ENCODE measurements at regions of chr10 and their contacts with region 1.

Region 1: DNA sequence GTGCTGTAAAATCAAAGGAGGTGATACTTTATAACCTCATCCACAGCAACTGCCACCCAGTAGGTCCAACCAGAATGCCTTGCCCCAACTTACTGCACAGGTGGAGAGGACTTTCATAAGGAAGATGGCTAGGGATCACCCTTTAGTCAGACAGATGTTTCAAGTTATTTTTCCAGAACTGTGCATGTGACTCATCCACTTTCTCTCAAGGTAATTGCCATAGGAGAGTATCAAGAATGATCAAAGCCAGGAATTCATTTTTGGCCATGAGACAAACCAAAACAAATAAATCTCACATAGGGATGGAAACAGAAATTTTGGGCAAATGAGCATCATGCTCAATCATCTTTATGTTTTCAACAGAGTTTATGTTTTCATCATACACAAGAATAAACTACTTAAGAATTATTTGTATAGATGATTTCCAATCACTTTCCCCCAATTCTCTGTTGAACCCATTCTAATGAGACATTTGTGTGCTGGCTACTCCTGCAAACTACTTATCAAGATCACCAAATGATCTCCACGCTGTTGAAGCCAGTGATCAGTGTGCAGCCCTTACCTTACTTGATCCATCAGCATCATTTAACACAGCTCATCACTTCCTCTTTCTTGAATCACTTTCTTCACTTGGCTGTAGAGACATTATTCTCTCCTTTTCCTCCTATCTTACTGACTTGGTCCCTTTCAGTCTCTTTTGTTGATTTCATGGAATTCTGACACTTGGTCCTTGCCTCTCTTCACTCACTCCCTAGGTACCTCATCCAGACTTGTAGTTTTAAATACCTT is 74.0 kb downstream of the SLC16A9 start:
- DNase-seq: no peak

Region 2: GRCh38 chr10:59680199-59680598 is 44.5 kb after region 1 on chr10:
- intact Hi-C with region 1: loop called (anchors 2 kb)
- DNase-seq: no peak

Region 3: GRCh38 chr10:59865101-59865500 is 229.4 kb after region 1 on chr10:
- intact Hi-C with region 1: no loop called
- DNase-seq: no peak

Region 4: DNA sequence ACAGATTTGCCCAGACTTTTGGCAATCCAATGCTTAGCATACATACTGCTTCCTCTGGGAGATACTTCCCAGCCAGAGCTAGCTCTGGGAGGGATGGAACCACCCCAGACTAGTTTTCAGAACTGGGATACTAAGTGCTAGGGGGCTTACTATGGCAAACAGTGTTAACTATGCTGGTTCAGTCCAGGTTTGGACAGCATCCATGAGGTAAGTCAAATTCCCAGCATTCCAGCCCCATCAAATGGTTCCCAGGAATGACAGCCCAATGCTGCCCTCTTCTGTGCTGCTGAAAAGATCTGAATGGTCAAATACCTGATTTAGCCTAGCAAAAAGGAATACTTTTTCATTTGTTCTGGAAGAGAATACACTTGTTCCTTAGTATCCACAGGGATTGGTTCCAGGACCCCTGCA is 412.4 kb after region 1 on chr10:
- intact Hi-C with region 1: no loop called
- DNase-seq: no peak

Measured in cardiac septum (tissue), 1 donor.